ENCODE measurements at regions of chr2 and their contacts with region 1.

Region 1: DNA sequence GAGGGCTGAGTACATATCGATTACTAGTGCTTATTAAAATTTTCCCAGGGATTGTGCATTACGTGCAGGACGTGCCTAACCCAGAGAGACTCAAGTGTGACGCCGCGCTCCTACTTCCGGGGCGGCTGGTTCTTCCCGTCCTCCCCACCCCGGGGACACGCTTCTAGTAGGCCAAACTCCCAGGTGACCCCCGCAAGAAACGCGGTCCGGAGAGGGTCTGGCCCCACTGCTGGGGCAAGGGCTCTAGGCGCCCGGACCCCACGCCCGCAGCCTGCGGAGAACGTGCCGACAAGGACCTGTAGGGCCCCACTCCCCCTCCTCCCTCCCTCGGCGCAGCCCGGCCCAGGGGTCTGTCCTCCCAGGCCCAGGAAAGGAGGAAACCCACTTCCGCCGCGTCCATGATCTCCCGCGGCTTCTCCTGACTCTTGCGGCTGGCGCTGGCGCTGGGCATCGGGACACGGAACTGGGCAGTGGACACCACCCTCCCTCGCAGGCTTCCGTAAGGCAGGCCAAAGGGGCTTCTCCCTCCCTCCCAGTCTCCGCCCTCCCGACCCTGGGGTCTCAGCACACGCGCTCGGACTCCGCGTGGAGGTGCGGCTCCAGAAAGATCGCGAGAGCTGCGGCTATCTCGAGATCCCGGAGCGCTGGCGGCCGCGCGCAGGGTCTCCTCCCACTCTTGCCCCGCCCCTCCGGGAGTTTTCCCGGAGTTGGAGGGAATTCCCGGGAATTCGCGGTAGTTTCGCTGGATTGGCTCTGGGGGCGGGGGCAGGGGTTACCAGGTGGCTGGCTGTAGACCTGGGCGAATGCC is at the start of gene DARS1:
- DNase-seq: peak; percentile 78
- H3K4me3 Mint-ChIP-seq: peak within 1 kb of the TSS; percentile 91
- H3K27ac Mint-ChIP-seq: peak within 1 kb of the TSS; percentile 97
- H3K4me1 Mint-ChIP-seq: peaks cover 62% of the 10 kb centered on the region
- H3K27me3 Mint-ChIP-seq: no peaks in the 10 kb centered on the region
- total RNA-seq, gene DARS1: 132 and 140 TPM in 2 replicates

Region 2: DNA sequence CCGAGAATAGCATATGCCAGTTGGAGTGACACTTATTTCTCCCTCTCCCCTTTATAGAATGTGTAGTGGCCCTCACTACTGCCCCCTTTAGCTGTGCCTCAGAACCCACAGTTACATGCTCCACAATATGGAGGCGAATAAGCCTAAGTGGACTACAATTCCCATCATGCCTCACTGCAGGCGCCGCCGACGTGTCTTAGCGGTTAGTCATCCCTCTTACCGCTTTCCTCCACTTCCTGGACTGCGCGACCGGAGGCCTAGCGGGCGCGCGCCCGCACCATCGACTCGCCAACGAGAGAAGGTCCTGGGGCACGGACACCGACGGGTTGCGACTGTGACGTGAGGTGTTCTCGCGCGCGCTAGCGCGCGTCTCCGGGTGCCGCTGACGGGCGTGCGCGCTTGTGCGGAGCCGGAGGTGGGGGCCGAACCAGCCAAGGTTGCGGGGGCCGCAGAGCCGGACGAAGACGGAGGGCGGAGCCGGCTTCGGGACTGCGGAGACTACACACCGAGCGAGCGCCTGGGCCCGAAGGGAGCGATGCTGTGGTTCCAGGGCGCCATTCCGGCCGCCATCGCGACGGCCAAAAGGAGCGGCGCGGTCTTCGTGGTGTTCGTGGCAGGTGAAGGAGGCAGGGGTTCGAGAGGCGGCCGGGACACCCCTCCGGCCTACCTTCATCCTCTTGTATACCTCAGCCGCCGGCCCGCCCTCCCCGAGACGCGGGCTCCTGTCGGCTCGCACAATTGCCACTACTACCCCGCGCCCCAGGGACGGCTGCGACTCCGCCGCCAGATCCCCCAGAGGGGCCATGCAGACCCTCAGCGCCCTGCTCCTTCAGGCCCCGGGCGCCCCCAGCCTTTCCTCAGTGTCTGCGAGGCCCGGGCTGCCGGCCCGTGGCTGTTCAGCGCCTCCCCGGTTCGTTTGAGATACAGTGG is 243.6 kb before region 1 on chr2 and contains the start of gene UBXN4:
- intact Hi-C with region 1: loop called (anchors 5 kb)
- DNase-seq: peak; percentile 89
- H3K4me3 Mint-ChIP-seq: peak within 1 kb of the TSS; percentile 99
- H3K27ac Mint-ChIP-seq: peak within 1 kb of the TSS; percentile 100
- H3K4me1 Mint-ChIP-seq: peaks cover 36% of the 10 kb centered on the region
- H3K27me3 Mint-ChIP-seq: no peaks in the 10 kb centered on the region
- total RNA-seq, gene UBXN4: 115 and 121 TPM in 2 replicates

Region 3: DNA sequence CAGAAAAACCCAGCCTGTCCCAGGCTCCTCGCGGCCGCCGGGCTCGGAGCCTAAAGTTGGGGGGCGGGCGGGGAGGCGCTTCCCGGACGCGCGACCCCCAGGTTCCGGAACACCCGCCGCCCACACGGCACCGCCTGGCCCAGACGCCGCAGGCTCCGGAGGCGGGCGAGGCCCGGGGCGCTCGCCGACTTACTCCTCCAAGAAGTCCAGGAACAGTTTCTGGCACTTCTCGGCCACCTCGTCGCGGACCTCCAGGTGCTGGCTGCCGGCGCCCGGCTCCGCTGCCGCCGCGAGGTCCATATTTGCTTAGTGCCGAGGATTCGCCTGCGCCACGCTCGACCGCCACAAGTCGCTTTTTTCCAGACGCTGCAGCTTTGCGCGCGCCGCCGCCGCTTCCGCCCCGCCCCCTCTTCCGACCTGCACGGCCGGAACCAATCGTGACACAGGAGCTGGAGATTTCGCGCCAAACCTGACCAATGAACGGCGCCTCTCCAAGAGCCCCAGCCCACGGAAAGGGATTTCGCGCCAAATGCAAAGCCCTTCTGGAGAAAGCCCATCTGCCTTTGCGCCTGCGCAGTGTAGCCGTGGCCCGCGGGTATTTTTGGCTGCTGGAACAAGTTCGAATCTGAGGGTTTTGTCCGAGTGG is 109.0 kb before region 1 on chr2 and contains the start of gene MCM6:
- intact Hi-C with region 1: loop called (anchors 1 kb)
- DNase-seq: peak; percentile 99
- H3K4me3 Mint-ChIP-seq: peak within 1 kb of the TSS; percentile 98
- H3K27ac Mint-ChIP-seq: peak within 1 kb of the TSS; percentile 99
- H3K4me1 Mint-ChIP-seq: peaks cover 45% of the 10 kb centered on the region
- H3K27me3 Mint-ChIP-seq: peaks cover 2% of the 10 kb centered on the region
- total RNA-seq, gene MCM6: 176 and 177 TPM in 2 replicates

Region 4: DNA sequence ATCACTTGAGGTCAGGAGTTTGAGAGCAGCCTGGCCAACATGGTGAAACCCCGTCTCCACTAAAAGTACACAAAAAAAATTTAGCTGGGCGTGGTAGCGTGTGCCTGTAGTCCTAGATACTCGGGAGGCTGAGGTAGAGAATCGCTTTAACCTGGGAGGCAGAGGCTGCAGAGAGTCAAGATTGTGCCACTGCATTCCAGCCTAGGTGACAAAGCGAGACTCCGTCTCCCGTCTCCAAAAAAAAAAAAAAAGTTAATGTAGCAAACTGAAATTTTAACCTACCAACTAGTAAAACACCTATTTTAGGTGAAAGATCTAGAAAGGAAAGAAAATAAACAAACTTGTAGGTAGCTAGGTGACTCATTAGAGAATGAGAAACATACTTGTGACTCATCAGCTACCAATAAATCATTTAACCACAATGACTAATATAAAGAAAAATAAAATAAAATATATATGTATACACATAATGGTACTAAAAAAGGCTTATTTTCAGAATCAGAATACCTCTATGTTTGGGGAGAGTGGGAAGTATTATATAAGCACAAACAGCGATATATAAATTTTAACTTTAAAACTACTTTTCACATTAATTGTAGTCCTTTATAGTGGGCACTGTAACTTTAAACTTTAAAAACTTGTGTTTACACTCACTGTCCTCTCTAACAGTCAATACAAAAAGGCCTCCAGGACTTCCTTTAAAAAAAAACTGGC is 36.4 kb before region 1 on chr2:
- intact Hi-C with region 1: loop called (anchors 1 kb)
- DNase-seq: no peak
- H3K4me3 Mint-ChIP-seq: peak overlapping the region; percentile 53
- H3K27ac Mint-ChIP-seq: peak overlapping the region; percentile 87
- H3K4me1 Mint-ChIP-seq: peaks cover 58% of the 10 kb centered on the region
- H3K27me3 Mint-ChIP-seq: no peaks in the 10 kb centered on the region

Region 5: GRCh38 chr2:136008205-136008865 is 23.1 kb after region 1 on chr2:
- intact Hi-C with region 1: loop called (anchors 2 kb)
- DNase-seq: peak; percentile 45
- H3K4me3 Mint-ChIP-seq: peak overlapping the region; percentile 2
- H3K27ac Mint-ChIP-seq: peak overlapping the region; percentile 32
- H3K4me1 Mint-ChIP-seq: peaks cover 47% of the 10 kb centered on the region
- H3K27me3 Mint-ChIP-seq: no peaks in the 10 kb centered on the region

Region 6: GRCh38 chr2:136154402-136154783 is 169.2 kb after region 1 on chr2:
- intact Hi-C with region 1: no loop called
- DNase-seq: no peak
- H3K4me3 Mint-ChIP-seq: no peak overlapping the region
- H3K27ac Mint-ChIP-seq: no peak overlapping the region
- H3K4me1 Mint-ChIP-seq: peaks cover 12% of the 10 kb centered on the region
- H3K27me3 Mint-ChIP-seq: peaks cover 37% of the 10 kb centered on the region

Region 7: GRCh38 chr2:136378712-136379595 is 393.7 kb after region 1 on chr2:
- intact Hi-C with region 1: loop called (anchors 1 kb)
- DNase-seq: peak; percentile 70
- H3K4me3 Mint-ChIP-seq: no peak overlapping the region
- H3K27ac Mint-ChIP-seq: no peak overlapping the region
- H3K4me1 Mint-ChIP-seq: peaks cover 80% of the 10 kb centered on the region
- H3K27me3 Mint-ChIP-seq: no peaks in the 10 kb centered on the region

Region 8: DNA sequence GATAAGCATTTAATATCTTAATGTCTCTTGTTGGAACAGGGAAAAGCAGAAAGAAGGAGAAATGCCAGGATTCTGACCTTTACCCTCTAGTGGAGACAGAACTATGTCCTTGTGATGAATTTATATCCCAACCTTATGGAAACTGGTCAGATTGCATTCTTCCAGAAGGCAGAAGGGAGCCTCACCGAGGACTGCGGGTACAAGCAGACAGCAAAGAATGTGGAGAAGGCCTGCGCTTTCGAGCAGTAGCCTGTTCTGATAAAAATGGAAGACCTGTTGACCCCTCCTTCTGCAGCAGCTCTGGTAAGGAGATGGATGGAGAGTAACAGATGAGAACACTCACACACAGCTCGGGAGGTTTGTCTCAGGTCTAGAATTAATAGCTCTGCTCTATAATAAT is 1426.3 kb after region 1 on chr2:
- intact Hi-C with region 1: no loop called
- DNase-seq: no peak
- H3K4me3 Mint-ChIP-seq: no peak overlapping the region
- H3K27ac Mint-ChIP-seq: no peak overlapping the region
- H3K4me1 Mint-ChIP-seq: no peaks in the 10 kb centered on the region
- H3K27me3 Mint-ChIP-seq: no peaks in the 10 kb centered on the region

Measured in activated T-helper 1 cell treated with anti-CD3 and anti-CD28 coated beads, Interleukin-12 subunit alpha, Interleukin-12 subunit beta, Interleukin-2, Interleukin-4 antibody, amounts not matched to agents 30 ng/mL and 10 ng/mL and 1 ng/mL, durations not matched to agents 14 hours and 24 hours and 36 hours (primary cell).